ENCODE measurements at regions of chr14 and their contacts with region 1.

Region 1: GRCh38 chr14:91323671-91324605 is 79.4 kb upstream of the GPR68 start:
- DNase-seq: peak; percentile 86 to 94 (median 91)
- H3K4me3 ChIP-seq: peak overlapping the region; percentile 32
- H3K4me3 Mint-ChIP-seq: peak overlapping the region; percentile 60 to 92 (median 82)
- H3K27ac ChIP-seq: peak overlapping the region; percentile 83
- H3K27ac Mint-ChIP-seq: peak overlapping the region; percentile 97 to 99 (median 98)
- H3K4me1 ChIP-seq: peaks cover 94% of the 10 kb centered on the region
- H3K4me1 Mint-ChIP-seq: peaks cover 67 to 87% (median 86%) of the 10 kb centered on the region in 3 donors
- H3K27me3 ChIP-seq: no peaks in the 10 kb centered on the region
- H3K27me3 Mint-ChIP-seq: peaks cover 0 to 2% of the 10 kb centered on the region in 2 donors

Region 2: GRCh38 chr14:91341751-91342154 is 17.8 kb after region 1 on chr14:
- CTCF ChIA-PET with region 1: interaction called, 11 read pairs
- POLR2A ChIA-PET with region 1: interaction called, 5 read pairs
- DNase-seq: no peak
- H3K4me3 ChIP-seq: no peak overlapping the region
- H3K4me3 Mint-ChIP-seq: no peak overlapping the region
- H3K27ac ChIP-seq: no peak overlapping the region
- H3K27ac Mint-ChIP-seq: peak overlapping the region in 2 of 8 donors; percentile 29 to 82
- H3K4me1 ChIP-seq: peaks cover 10% of the 10 kb centered on the region
- H3K4me1 Mint-ChIP-seq: peaks cover 22 to 45% (median 32%) of the 10 kb centered on the region in 3 donors
- H3K27me3 ChIP-seq: no peaks in the 10 kb centered on the region
- H3K27me3 Mint-ChIP-seq: no peaks in the 10 kb centered on the region

Region 3: DNA sequence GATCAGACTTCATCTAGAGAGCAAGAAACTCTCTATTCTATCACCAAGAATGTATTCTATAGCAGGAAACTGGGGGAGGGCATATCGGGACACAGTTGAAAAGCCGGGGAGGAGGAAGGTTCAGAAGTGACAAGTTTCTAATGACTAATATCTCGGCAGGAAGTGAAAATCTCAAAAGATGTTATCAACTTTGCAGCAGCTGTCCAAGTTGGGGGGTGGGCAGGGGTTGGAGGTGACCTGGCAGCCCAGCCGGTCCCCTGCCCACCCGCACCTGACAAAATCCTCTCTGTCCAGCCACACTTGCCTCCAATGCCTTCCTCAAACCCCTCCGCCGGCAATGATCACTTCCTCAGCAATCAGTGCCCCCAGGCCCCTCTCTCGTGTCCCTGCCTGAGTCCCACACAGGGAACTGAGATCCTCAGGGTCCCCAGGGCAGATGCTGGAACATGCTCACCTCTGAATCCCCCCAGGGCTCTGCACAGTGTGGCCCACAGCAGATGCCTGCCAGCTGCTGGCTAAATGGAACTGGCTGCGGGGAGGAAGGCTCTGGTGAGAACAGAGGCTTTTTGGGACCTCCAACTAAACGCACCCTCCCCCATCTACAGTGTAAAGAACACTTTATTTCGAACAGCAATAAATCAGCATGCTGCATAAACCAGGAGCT is 49.8 kb after region 1 on chr14:
- CTCF ChIA-PET with region 1: interaction called, 13 read pairs
- POLR2A ChIA-PET with region 1: interaction called, 6 read pairs
- DNase-seq: peak in 4 of 5 donors; percentile 37 to 68 (median 51)
- H3K4me3 ChIP-seq: peak overlapping the region; percentile 68
- H3K4me3 Mint-ChIP-seq: peak overlapping the region; percentile 71 to 90 (median 85)
- H3K27ac ChIP-seq: peak overlapping the region; percentile 63
- H3K27ac Mint-ChIP-seq: peak overlapping the region; percentile 84 to 99 (median 95)
- H3K4me1 ChIP-seq: peaks cover 99% of the 10 kb centered on the region
- H3K4me1 Mint-ChIP-seq: peaks cover 94 to 100% (median 100%) of the 10 kb centered on the region in 3 donors
- H3K27me3 ChIP-seq: no peaks in the 10 kb centered on the region
- H3K27me3 Mint-ChIP-seq: no peaks in the 10 kb centered on the region

Region 4: DNA sequence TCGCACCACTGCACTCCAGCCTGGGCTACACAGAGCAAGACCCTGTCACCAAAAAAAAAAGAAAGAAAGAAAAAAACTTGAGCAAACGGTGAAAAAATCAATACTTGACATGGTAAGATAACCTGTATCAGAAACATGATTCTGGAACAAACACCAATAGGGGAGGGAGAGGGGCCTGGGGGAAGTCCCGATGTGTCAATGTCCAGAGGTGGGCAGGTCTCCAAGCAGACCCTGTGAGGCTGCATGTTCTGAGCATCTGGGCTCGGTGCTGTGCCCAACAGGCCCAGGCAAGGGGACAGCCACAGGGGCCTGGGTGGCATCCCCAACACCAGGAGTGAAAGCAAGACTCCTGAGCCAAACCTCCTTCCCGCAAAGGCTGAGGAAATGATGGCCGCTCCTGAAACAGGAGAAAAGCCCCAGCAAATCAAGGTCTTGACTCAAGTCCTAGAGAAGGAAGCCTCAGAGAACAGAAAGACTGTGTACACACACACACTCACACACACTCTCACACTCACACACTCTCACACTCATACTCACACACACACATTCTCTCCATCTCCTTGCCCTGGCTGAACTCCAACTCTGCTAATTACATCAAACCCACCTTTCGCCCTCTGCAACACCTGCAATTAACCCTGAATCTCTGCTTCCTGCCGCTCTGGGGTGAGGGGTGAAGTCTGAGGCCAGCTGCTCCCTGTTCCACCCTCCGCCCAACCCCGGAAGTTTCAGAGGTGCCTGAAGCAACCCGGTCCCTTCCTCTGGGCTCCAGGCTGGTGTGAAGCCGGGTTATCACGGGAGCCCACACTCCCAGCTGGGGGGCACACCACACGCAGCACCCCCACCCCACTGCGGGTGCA is 73.2 kb after region 1 on chr14:
- CTCF ChIA-PET with region 1: interaction called, 44 read pairs
- POLR2A ChIA-PET with region 1: interaction called, 4 read pairs
- DNase-seq: peak in 4 of 5 donors; percentile 52 to 77 (median 70)
- H3K4me3 ChIP-seq: peak overlapping the region; percentile 44
- H3K4me3 Mint-ChIP-seq: peak overlapping the region; percentile 88 to 100 (median 99)
- H3K27ac ChIP-seq: peak overlapping the region; percentile 43
- H3K27ac Mint-ChIP-seq: peak overlapping the region; percentile 91 to 100 (median 96)
- H3K4me1 ChIP-seq: peaks cover 95% of the 10 kb centered on the region
- H3K4me1 Mint-ChIP-seq: peaks cover 86 to 99% (median 97%) of the 10 kb centered on the region in 3 donors
- H3K27me3 ChIP-seq: no peaks in the 10 kb centered on the region
- H3K27me3 Mint-ChIP-seq: peaks cover 0 to 1% of the 10 kb centered on the region in 2 donors

Region 5: GRCh38 chr14:91402771-91403600 is 79.0 kb after region 1 on chr14:
- CTCF ChIA-PET with region 1: interaction called, 44 read pairs
- POLR2A ChIA-PET with region 1: interaction called, 4 read pairs
- DNase-seq: peak in 2 of 5 donors; percentile 49 to 51
- H3K4me3 ChIP-seq: peak overlapping the region; percentile 40
- H3K4me3 Mint-ChIP-seq: peak overlapping the region; percentile 68 to 91 (median 85)
- H3K27ac ChIP-seq: peak overlapping the region; percentile 53
- H3K27ac Mint-ChIP-seq: peak overlapping the region; percentile 92 to 100 (median 95)
- H3K4me1 ChIP-seq: peaks cover 95% of the 10 kb centered on the region
- H3K4me1 Mint-ChIP-seq: peaks cover 90 to 97% (median 94%) of the 10 kb centered on the region in 3 donors
- H3K27me3 ChIP-seq: no peaks in the 10 kb centered on the region
- H3K27me3 Mint-ChIP-seq: peaks cover 0 to 1% of the 10 kb centered on the region in 2 donors

Region 6: GRCh38 chr14:91424813-91425530 is 101.0 kb after region 1 on chr14:
- CTCF ChIA-PET with region 1: interaction called, 109 read pairs
- POLR2A ChIA-PET with region 1: no interaction called
- DNase-seq: no peak
- H3K4me3 ChIP-seq: no peak overlapping the region
- H3K4me3 Mint-ChIP-seq: no peak overlapping the region
- H3K27ac ChIP-seq: no peak overlapping the region
- H3K27ac Mint-ChIP-seq: peak overlapping the region in 1 of 8 donors; percentile 5
- H3K4me1 ChIP-seq: peaks cover 7% of the 10 kb centered on the region
- H3K4me1 Mint-ChIP-seq: peaks cover 12 to 32% (median 24%) of the 10 kb centered on the region in 3 donors
- H3K27me3 ChIP-seq: no peaks in the 10 kb centered on the region
- H3K27me3 Mint-ChIP-seq: no peaks in the 10 kb centered on the region

Measured in CD8-positive, alpha-beta memory T cell (primary cell).